ENCODE measurements at regions of chr4 and their contacts with region 1.

Region 1: GRCh38 chr4:183471946-183472708 is 27.7 kb downstream of the CDKN2AIP start:
- DNase-seq: peak; percentile 74 to 95
- ATAC-seq: peak; percentile 84

Region 2: DNA sequence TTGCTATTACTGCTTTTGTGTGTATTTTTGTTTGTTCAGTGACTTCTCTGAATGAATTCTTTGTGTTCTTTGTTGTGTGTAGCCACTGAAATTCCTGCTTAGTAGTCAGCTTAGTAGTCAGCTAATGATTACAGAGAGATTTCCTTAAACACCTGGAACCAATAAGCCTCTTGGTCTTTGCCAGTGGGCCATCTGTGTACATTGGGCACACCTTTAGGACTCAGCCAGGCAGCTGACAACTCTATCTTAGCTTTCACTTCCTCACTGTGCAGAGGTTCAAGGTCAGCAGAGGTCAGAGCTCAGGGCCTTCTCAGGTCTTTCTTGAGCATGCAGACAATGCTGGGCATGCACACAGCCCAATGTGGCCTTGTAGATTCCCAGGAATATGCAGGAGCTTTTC is 127.6 kb after region 1 on chr4:
- intact Hi-C with region 1: loop called in 1 of 2 experiments (anchors 10 kb)
- DNase-seq: no peak
- ATAC-seq: peak; percentile 36